ENCODE measurements at regions of chrX and their contacts with region 1.

Region 1: DNA sequence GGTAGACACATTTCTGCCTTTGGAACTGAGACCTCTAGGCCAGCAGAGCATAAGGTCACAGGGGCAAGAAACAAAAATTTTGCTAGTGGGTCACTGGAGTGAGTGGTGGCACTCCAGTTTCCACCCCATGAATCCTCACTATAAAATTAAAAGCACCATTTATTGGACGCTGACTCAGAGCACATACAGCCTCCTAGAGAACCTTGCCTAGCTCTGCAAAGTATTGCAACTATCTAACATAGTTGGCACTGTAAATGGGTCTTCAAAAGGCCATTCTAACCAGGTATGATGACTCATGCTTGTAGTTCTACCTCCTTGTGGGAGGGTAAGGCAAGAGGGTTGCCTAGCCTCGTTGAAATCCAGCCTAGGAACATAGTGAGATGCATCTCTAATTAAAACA is 25.1 kb downstream of the RRAGB start:
- DNase-seq: no peak
- H3K4me3 ChIP-seq: no peak overlapping the region
- H3K27ac ChIP-seq: no peak overlapping the region
- H3K4me1 ChIP-seq: no peaks in the 10 kb centered on the region
- H3K27me3 ChIP-seq: peaks cover 0 to 7% of the 10 kb centered on the region in 2 donors
- CTCF ChIP-seq: no peak
- POLR2A ChIP-seq: no peak

Region 2: GRCh38 chrX:55710701-55711100 is 31.9 kb before region 1 on chrX:
- intact Hi-C with region 1: no loop called
- DNase-seq: peak in 1 of 2 donors; percentile 27
- H3K4me3 ChIP-seq: no peak overlapping the region
- H3K27ac ChIP-seq: peak overlapping the region in 1 of 2 donors; percentile 48
- H3K4me1 ChIP-seq: no peaks in the 10 kb centered on the region
- H3K27me3 ChIP-seq: peaks cover 0 to 11% of the 10 kb centered on the region in 2 donors
- CTCF ChIP-seq: no peak
- POLR2A ChIP-seq: no peak

Region 3: GRCh38 chrX:56563231-56564161 is 820.8 kb after region 1 on chrX and contains the start of gene UBQLN2:
- intact Hi-C with region 1: loop called (anchors 5 kb)
- DNase-seq: peak; percentile 67 to 77
- H3K4me3 ChIP-seq: peak within 1 kb of the TSS; percentile 62 to 72 (median 66)
- H3K27ac ChIP-seq: peak within 1 kb of the TSS; percentile 96 to 98
- H3K4me1 ChIP-seq: no peaks in the 10 kb centered on the region
- H3K27me3 ChIP-seq: peaks cover 0 to 29% of the 10 kb centered on the region in 2 donors
- CTCF ChIP-seq: no peak
- POLR2A ChIP-seq: peak; percentile 63
- total RNA-seq, gene UBQLN2: 19.4 to 24.7 (median 21.3) TPM